Uterus (tissue), 4 donors: ENCODE measurements at regions of chr11 and their contacts with region 1.

Region 1: DNA sequence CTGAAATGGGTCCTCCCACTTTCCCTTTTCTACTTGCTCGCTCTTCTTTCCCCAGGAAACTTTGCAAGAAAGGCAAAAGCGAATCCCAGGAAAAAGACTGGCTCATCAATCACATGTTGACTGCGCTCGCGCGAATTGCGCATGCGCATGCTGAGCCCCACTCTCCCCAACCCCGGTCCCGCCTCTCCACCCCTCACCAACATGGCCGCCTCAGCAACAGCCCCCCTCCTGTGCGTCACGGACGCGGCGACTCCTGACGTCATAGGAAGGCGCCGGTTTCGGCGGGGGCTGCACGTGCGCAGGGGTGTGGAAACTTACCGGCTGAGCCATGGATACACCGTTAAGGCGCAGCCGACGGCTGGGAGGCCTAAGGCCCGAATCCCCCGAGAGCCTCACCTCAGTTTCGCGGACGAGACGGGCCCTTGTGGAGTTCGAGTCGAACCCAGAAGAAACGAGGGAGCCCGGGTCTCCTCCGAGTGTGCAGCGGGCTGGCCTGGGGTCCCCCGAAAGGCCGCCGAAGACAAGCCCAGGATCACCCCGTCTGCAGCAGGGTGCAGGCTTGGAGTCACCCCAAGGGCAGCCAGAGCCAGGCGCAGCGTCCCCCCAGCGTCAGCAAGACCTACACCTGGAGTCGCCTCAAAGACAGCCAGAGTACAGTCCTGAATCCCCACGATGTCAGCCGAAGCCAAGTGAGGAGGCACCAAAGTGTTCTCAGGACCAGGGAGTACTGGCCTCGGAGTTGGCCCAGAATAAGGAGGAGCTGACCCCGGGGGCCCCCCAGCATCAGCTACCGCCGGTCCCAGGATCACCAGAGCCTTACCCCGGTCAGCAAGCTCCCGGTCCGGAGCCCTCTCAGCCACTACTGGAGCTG is at the start of gene CCDC86:
- DNase-seq: peak; percentile 98
- H3K4me3 ChIP-seq: peak within 1 kb of the TSS; percentile 83 to 90
- H3K27ac ChIP-seq: peak within 1 kb of the TSS; percentile 78
- H3K4me1 ChIP-seq: peaks cover 0 to 4% of the 10 kb centered on the region in 2 donors
- H3K27me3 ChIP-seq: no peaks in the 10 kb centered on the region
- CTCF ChIP-seq: peak in 1 of 4 experiments; percentile 45
- POLR2A ChIP-seq: peak in 1 of 2 donors; percentile 39
- total RNA-seq, gene CCDC86: 7.4 to 23.0 (median 8.3) TPM

Region 2: DNA sequence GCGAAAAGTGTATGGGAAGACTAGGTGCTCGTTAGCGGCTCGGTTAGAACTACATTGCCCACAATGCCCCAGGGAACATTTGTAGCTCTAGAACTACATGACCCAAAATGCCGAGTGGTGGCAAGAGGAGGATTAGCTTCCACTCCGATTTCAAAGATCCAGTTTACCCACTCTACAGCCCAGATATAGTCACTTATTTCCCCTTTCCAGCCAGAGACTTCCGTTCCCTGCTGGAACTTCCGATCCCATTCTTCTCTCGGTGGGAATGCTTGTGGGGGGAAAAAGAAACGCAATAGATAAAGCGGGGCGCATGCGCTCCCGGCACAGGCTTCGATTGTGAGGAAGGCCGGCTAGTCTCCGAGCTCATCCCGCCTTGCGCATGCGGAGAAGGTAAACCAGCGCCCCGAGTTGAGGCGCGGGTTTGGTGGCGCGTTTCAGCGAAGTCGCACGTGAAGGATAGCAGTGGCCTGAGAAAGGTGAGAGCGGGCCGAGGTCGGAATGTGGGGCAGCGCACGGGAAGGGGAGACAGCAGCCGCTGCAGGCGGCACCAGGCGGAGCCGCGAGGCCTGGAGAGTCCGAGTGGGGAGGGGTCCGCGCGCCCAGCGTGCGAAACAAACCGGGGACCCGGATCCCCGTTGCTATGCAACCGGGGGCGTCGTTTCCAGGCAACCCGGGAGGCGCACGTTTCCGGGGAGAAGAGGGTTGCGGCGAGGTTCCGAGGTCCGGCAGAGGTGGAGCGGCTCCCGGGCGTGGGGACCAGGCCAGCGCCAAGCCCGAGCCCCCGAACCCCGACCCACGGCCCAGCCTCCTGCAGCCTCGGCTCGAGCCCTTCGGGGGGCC is 72.0 kb after region 1 on chr11 and contains the start of gene TMEM109:
- intact Hi-C with region 1: loop called (anchors 5 kb)
- DNase-seq: peak; percentile 87 to 88
- H3K4me3 ChIP-seq: peak within 1 kb of the TSS; percentile 63 to 96
- H3K27ac ChIP-seq: peak within 1 kb of the TSS; percentile 91 to 95
- H3K4me1 ChIP-seq: peaks cover 11 to 17% of the 10 kb centered on the region in 2 donors
- H3K27me3 ChIP-seq: no peaks in the 10 kb centered on the region
- CTCF ChIP-seq: peak in 2 of 4 experiments; percentile 1 to 15
- POLR2A ChIP-seq: peak; percentile 59 to 70
- total RNA-seq, gene TMEM109: 37.1 to 155 (median 75.3) TPM